Activated CD4-positive, alpha-beta memory T cell treated with anti-CD3 and anti-CD28 coated beads, Interleukin-2, amount 10 ng/mL, durations not matched to agents 7 days and 5 days (primary cell): ENCODE measurements at regions of chr11 and their contacts with region 1.

Region 1: DNA sequence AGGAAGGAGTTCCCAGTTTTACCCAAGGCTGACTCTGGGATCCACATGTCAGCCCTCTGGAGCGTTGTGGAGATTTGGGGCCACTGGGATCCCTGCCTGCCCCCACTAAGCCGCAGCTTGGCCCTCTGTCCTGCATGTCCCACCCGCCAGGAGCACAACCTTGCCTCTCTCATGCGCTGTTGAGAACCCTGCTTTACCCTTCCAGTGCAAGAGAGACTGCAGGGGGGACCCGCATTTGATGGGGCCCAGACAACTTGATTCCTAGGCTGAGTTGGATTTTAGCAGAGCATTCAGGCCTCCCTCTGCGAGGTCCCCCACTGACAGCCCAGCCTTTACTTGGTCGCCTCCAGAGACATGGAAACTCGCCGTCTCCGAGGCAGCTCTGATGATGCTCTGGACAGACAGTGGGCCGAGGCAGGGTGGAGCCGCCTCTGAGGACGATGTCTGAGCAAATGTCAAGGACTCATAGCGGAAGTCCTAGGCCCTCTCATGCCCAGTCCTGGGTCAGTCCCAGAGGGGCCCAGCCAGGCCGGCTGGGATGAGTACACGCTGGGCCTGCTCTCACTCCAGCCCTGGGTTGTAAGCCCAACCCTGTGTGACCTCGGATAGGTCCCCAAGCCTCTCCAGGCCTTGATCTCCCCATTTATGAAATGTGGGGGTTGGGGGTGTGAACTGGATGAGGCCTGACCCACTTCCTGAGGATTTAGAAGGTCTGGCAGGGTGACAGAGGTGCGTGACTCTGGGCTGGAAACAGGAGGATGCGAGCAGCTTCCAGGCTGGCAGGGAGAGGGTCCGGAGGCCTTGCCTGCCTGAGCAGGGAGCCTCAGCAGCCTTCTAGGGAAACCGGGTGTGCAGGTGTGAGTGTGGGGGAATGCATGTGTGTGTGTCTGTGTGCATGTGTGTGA is 630 bp downstream of the CD5 start:
- DNase-seq: peak; percentile 46
- H3K4me3 Mint-ChIP-seq: no peak overlapping the region
- H3K27ac Mint-ChIP-seq: no peak overlapping the region
- H3K4me1 Mint-ChIP-seq: peaks cover 43% of the 10 kb centered on the region
- H3K27me3 Mint-ChIP-seq: no peaks in the 10 kb centered on the region

Region 2: DNA sequence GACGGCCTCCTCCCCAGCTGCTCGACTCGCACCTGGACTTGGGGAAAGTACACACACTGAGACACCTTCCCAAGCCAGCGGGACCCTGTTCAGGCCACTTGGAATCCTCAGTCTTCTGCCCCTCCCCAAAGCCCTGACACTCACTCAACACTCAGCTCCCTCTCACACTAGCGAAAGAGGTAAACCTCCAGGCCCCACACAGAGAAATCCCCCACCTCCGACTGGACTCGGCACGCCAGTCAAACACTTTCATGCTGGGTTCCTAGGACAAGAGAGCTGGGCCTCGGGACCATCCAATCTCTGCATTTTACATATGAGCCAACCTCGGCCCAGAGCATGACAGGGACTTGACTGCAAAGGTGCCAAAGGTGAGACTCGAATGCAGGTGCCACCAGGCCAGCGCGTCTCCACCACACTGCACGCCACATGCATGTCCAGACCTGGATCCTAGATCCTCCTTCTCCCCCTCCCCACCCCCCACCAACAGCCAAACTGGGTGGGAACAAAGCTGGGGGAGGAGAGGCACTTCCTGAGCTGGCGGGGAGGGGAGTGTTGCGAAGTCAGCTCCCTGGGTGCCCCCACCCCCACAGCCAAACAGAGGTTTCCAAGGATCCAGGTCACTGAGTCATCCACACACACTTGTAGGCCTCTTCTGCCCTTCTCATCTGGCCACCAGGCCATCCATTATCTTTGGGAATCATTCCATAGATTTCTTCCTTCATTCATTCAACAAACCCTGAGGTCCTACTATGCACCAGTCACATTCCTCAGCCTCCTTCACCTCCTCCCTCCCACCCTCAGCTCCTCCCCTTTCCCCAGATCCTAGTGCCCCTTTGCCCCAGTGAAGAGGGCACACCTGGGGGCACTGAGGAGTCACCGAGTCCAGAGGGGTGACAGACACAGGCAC is 11.3 kb before region 1 on chr11:
- CTCF ChIA-PET with region 1: interaction called, 3 read pairs
- POLR2A ChIA-PET with region 1: interaction called, 50 read pairs
- DNase-seq: peak; percentile 54
- H3K4me3 Mint-ChIP-seq: peak overlapping the region; percentile 77
- H3K27ac Mint-ChIP-seq: peak overlapping the region; percentile 96
- H3K4me1 Mint-ChIP-seq: peaks cover 69% of the 10 kb centered on the region
- H3K27me3 Mint-ChIP-seq: no peaks in the 10 kb centered on the region

Region 3: DNA sequence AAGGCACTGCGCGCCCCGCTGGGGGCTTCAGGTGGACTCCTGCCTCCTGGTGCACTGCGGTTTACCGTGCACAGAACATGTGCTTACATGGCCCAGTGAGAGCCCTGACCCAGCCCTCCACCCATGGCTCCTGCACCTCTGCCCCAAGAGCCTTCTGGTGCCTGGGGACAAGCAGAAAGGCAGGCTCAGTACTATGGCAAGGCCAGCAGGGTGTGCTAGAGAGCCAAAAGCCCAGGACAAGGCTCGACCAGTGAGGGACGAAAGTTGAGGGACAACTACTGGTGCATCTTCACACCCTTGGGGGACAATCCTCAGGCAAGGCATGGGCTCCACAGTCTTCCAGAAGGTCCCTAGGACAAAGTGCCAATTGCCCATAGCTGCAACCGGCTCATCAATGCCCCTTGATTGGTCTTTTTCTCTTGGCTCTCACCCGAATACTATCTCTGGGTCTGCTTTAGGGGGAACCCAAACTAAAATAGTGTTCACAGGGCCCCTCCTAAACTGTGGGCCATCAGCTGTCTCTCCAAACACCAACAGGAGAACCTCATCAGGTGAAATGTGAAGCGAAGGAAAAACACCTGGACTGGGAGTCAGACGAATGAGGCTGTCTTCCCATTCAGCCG is 151.6 kb after region 1 on chr11:
- CTCF ChIA-PET with region 1: no interaction called
- POLR2A ChIA-PET with region 1: no interaction called
- DNase-seq: peak; percentile 73
- H3K4me3 Mint-ChIP-seq: no peak overlapping the region
- H3K27ac Mint-ChIP-seq: no peak overlapping the region
- H3K4me1 Mint-ChIP-seq: no peaks in the 10 kb centered on the region
- H3K27me3 Mint-ChIP-seq: peaks cover 3% of the 10 kb centered on the region

Region 4: GRCh38 chr11:61281581-61282250 is 178.8 kb after region 1 on chr11:
- CTCF ChIA-PET with region 1: no interaction called
- POLR2A ChIA-PET with region 1: no interaction called
- DNase-seq: peak; percentile 30
- H3K4me3 Mint-ChIP-seq: no peak overlapping the region
- H3K27ac Mint-ChIP-seq: no peak overlapping the region
- H3K4me1 Mint-ChIP-seq: peaks cover 2% of the 10 kb centered on the region
- H3K27me3 Mint-ChIP-seq: peaks cover 3% of the 10 kb centered on the region